K562 (cell line): ENCODE measurements at regions of chr10 and their contacts with region 1.

Region 1: DNA sequence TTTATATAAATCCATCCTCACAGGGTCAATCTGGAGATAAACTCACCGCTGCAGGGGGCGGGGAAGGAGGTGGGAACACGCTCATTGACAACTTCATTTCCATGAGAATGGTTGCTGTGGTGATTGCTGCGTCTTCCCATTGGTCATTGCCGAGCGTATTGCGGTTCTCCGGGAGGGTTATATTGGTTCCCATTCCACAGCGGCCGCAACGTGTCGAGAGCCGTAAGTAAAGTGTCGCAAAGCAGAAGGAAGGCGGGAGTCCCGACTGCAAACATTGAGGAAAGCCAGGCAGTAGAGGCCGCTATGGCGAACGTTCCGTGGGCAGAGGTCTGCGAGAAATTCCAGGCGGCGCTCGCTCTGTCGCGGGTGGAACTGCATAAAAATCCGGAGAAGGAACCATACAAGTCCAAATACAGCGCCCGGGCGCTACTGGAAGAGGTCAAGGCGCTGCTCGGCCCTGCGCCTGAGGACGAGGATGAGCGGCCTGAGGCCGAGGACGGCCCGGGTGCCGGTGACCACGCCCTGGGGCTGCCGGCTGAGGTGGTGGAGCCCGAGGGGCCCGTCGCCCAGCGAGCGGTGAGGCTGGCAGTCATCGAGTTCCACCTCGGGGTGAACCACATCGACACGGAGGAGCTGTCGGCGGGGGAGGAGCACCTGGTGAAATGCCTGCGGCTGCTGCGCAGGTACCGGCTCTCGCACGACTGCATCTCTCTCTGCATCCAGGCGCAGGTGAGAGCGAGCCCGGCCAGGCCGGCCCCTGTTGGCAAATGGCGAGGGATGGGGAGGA is at the start of gene KIFBP:
- DNase-seq: peak; percentile 98 to 99 (median 99)
- ATAC-seq: peak; percentile 91
- H3K4me3 ChIP-seq: peak within 1 kb of the TSS; percentile 77
- H3K27ac ChIP-seq: peak within 1 kb of the TSS; percentile 65
- H3K4me1 ChIP-seq: peaks cover 5 to 18% of the 10 kb centered on the region in 2 experiments; a peak in 3 of 5 replicates
- H3K27me3 ChIP-seq: no peaks in the 10 kb centered on the region
- CTCF ChIP-seq: peak; percentile 85 to 97 (median 94)
- EP300 ChIP-seq: peak; percentile 48
- POLR2A ChIP-seq: peak; percentile 89
- RAD21 ChIP-seq: peak; percentile 47 to 65; a peak in 3 of 4 replicates
- polyA plus RNA-seq, gene KIFBP: 5.6 to 8.8 TPM

Region 2: DNA sequence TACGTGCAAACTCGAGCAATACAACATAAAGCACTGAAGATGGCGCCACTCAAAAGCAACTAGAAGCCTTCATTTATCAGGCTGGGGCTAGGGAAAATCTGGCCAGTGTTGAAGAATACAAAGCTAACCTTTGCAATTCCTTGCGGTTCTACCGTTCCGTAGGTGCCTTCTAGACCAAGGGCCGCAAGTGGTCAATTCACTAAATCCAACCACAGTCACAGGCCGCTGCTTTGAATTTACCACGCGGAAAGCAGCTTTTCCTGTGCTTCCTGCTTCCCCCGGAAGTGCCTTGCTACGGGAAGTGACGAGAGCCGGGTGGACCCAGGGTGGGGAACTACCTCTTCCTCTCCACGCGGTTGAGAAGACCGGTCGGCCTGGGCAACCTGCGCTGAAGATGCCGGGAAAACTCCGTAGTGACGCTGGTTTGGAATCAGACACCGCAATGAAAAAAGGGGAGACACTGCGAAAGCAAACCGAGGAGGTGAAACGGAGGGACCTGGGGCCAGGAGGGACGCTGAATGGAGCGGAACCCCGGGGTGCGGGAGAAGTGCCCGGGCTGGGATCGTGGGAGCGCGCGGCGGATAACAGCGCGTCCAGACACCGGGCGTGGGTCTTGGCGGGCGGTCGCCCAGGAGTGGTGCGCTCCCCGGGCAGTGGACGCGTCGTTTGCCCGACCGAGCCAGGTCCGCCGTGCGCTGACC is 32.7 kb before region 1 on chr10 and contains the start of gene DDX21:
- CTCF ChIA-PET with region 1: no interaction called
- POLR2A ChIA-PET with region 1: interaction called, 11 read pairs
- in situ Hi-C with region 1: no loop called
- intact Hi-C with region 1: no loop called
- DNase-seq: peak; percentile 93 to 97 (median 96)
- ATAC-seq: peak; percentile 90
- H3K4me3 ChIP-seq: peak within 1 kb of the TSS; percentile 93
- H3K27ac ChIP-seq: peak within 1 kb of the TSS; percentile 95
- H3K4me1 ChIP-seq: peaks cover 22% of the 10 kb centered on the region in 2 experiments; a peak in 4 of 5 replicates
- H3K27me3 ChIP-seq: no peaks in the 10 kb centered on the region
- CTCF ChIP-seq: peak; percentile 63 to 86 (median 76)
- EP300 ChIP-seq: no peak
- POLR2A ChIP-seq: peak; percentile 99
- RAD21 ChIP-seq: peak; percentile 49 to 55
- polyA plus RNA-seq, gene DDX21: 143 to 156 TPM

Region 3: DNA sequence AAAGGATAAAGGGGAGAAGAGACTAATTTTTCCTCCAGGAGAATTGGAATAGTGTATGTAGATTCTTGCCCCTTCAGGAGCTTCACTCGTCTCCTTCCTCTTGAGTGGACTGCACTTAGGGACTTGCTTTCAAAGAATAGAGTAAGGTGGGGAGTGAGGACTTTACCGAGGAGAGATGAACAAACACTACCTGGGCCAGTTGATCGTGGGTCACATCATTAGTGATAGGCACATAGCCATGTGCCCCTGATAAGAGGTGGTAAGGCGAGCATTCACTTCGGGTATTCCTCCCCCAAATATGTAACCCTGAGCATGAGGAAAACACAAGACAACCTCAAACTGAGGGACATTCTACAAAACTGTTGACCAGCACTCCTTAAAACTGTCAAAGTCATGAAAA is 14.7 kb before region 1 on chr10:
- CTCF ChIA-PET with region 1: no interaction called
- POLR2A ChIA-PET with region 1: interaction called, 41 read pairs
- in situ Hi-C with region 1: no loop called
- intact Hi-C with region 1: no loop called
- DNase-seq: no peak
- ATAC-seq: no peak
- H3K4me3 ChIP-seq: no peak overlapping the region
- H3K27ac ChIP-seq: no peak overlapping the region
- H3K4me1 ChIP-seq: no peaks in the 10 kb centered on the region
- H3K27me3 ChIP-seq: no peaks in the 10 kb centered on the region
- CTCF ChIP-seq: no peak
- EP300 ChIP-seq: no peak
- POLR2A ChIP-seq: 0 out of 2 replicates have a peak, but pooled peaks have one; percentile 39
- RAD21 ChIP-seq: no peak

Region 4: GRCh38 chr10:69004821-69005220 is 16.1 kb after region 1 on chr10:
- CTCF ChIA-PET with region 1: no interaction called
- POLR2A ChIA-PET with region 1: interaction called, 10 read pairs
- in situ Hi-C with region 1: no loop called
- intact Hi-C with region 1: no loop called
- DNase-seq: peak in 2 of 4 experiments; percentile 38 to 56
- ATAC-seq: peak; percentile 83
- H3K4me3 ChIP-seq: no peak overlapping the region
- H3K27ac ChIP-seq: no peak overlapping the region
- H3K4me1 ChIP-seq: no peaks in the 10 kb centered on the region
- H3K27me3 ChIP-seq: no peaks in the 10 kb centered on the region
- CTCF ChIP-seq: peak; percentile 54 to 90 (median 62); a peak in 5 of 6 replicates
- EP300 ChIP-seq: no peak
- POLR2A ChIP-seq: no peak
- RAD21 ChIP-seq: peak; percentile 91 to 98

Region 5: GRCh38 chr10:69222157-69223027 is 233.7 kb after region 1 on chr10:
- CTCF ChIA-PET with region 1: no interaction called
- POLR2A ChIA-PET with region 1: no interaction called
- in situ Hi-C with region 1: no loop called
- intact Hi-C with region 1: loop called (anchors 5 kb)
- DNase-seq: peak; percentile 82 to 93 (median 86)
- ATAC-seq: peak; percentile 92
- H3K4me3 ChIP-seq: peak overlapping the region; percentile 24
- H3K27ac ChIP-seq: peak overlapping the region; percentile 94
- H3K4me1 ChIP-seq: peaks cover 9 to 23% of the 10 kb centered on the region in 2 experiments; a peak in 4 of 5 replicates
- H3K27me3 ChIP-seq: no peaks in the 10 kb centered on the region
- CTCF ChIP-seq: peak; percentile 88 to 94 (median 91)
- EP300 ChIP-seq: peak; percentile 61
- POLR2A ChIP-seq: peak; percentile 72
- RAD21 ChIP-seq: peak; percentile 74 to 85

Region 6: DNA sequence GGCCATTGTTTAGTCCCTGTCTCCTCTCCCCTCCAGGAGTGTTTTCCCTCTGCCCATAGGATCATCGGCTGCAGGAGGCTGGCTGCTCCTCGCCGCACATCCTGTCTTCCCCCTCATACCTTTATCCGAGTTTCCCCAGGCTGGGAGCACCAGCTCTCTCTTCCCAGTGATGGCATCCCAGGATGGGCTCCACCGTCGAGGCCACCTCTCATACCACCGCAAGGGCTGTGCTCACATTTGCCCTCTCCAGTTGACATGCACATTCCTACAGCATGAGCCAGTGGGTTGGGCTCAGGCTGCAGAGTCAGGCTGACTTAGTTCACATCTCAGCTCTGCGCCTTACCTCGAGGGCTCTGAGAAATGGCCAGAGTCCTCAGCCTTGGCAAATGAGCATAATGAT is 243.5 kb after region 1 on chr10:
- CTCF ChIA-PET with region 1: no interaction called
- POLR2A ChIA-PET with region 1: interaction called, 3 read pairs
- in situ Hi-C with region 1: loop called (anchors 5 kb)
- intact Hi-C with region 1: no loop called
- DNase-seq: no peak
- ATAC-seq: no peak
- H3K4me3 ChIP-seq: no peak overlapping the region
- H3K27ac ChIP-seq: no peak overlapping the region
- H3K4me1 ChIP-seq: peaks cover 8 to 14% of the 10 kb centered on the region in 2 experiments
- H3K27me3 ChIP-seq: no peaks in the 10 kb centered on the region
- CTCF ChIP-seq: no peak
- EP300 ChIP-seq: no peak
- POLR2A ChIP-seq: no peak
- RAD21 ChIP-seq: no peak

Region 7: GRCh38 chr10:69408318-69409175 is 419.8 kb after region 1 on chr10:
- CTCF ChIA-PET with region 1: no interaction called
- POLR2A ChIA-PET with region 1: no interaction called
- in situ Hi-C with region 1: no loop called
- intact Hi-C with region 1: loop called (anchors 5 kb)
- DNase-seq: peak; percentile 96 to 99 (median 98)
- ATAC-seq: peak; percentile 91
- H3K4me3 ChIP-seq: peak overlapping the region; percentile 14; the same call in 1 of the 2 replicates
- H3K27ac ChIP-seq: peak overlapping the region; percentile 69; the same call in 2 of the 3 replicates
- H3K4me1 ChIP-seq: peaks cover 24 to 25% of the 10 kb centered on the region in 2 experiments
- H3K27me3 ChIP-seq: peaks cover 0 to under 1% of the 10 kb centered on the region in 2 experiments; a peak in 1 of 5 replicates
- CTCF ChIP-seq: peak; percentile 50 to 73 (median 68)
- EP300 ChIP-seq: no peak
- POLR2A ChIP-seq: peak; percentile 66
- RAD21 ChIP-seq: peak in 1 of 2 experiments; percentile 43; a peak in 2 of 4 replicates